CD8-positive, alpha-beta T cell (primary cell): ENCODE measurements at regions of chr21 and their contacts with region 1.

Region 1: GRCh38 chr21:42009831-42010523 is at the start of gene ZBTB21:
- DNase-seq: peak; percentile 95 to 99 (median 98)
- ATAC-seq: peak; percentile 75
- H3K4me3 ChIP-seq: peak within 1 kb of the TSS; percentile 64 to 95
- H3K4me3 Mint-ChIP-seq: peak within 1 kb of the TSS; percentile 98
- H3K27ac ChIP-seq: peak within 1 kb of the TSS; percentile 96 to 100
- H3K27ac Mint-ChIP-seq: peak within 1 kb of the TSS; percentile 100
- H3K4me1 ChIP-seq: peaks cover 5% of the 10 kb centered on the region
- H3K4me1 Mint-ChIP-seq: peaks cover 38% of the 10 kb centered on the region
- H3K27me3 ChIP-seq: no peaks in the 10 kb centered on the region
- H3K27me3 Mint-ChIP-seq: no peaks in the 10 kb centered on the region
- CTCF ChIP-seq: no peak
- total RNA-seq, gene ZBTB21: 130 to 141 TPM

Region 2: DNA sequence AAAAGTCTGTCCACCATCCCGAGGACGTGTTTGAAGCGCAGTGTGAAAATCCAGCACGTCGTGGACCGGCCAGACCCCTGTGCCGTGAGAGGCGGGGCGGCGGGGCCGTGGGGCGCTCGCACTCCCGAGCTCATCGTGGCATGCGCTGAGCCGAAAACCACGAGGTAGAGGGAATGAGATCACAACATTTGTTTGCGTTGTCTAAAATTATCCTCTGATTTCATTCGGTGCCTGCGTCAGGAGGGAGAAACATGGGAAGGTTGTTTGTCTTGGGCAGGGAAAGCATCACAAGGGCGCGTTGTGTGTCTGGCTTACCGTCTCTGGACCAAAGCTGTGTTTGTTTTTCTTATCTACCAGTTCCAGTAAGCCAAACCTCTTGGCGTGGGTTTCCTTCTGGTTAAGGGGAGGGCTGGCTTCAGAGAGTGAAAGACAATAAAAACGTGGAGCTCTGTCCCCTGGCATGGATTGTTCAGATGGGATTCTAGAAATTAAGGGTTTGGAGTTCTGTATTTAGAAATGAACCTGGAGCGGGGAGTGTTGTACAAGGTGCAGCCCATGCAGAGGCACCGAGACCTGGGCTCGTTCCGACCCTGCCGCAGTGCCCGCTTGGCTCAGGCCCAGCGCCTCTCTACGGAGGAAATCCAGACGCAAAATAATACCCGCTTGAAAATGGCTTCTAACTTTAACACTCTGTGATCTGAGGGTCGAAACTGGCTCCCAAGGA is 762.3 kb before region 1 on chr21:
- CTCF ChIA-PET with region 1: no interaction called
- POLR2A ChIA-PET with region 1: no interaction called
- intact Hi-C with region 1: no loop called
- DNase-seq: no peak
- ATAC-seq: no peak
- H3K4me3 ChIP-seq: no peak overlapping the region
- H3K4me3 Mint-ChIP-seq: no peak overlapping the region
- H3K27ac ChIP-seq: no peak overlapping the region
- H3K27ac Mint-ChIP-seq: no peak overlapping the region
- H3K4me1 ChIP-seq: no peaks in the 10 kb centered on the region
- H3K4me1 Mint-ChIP-seq: no peaks in the 10 kb centered on the region
- H3K27me3 ChIP-seq: no peaks in the 10 kb centered on the region
- H3K27me3 Mint-ChIP-seq: peaks cover 13% of the 10 kb centered on the region
- CTCF ChIP-seq: no peak

Region 3: GRCh38 chr21:41816220-41817165 is 193.5 kb before region 1 on chr21:
- CTCF ChIA-PET with region 1: interaction called, 3 read pairs
- POLR2A ChIA-PET with region 1: no interaction called
- intact Hi-C with region 1: loop called in 1 of 2 experiments (anchors 2 kb)
- DNase-seq: peak; percentile 31 to 75 (median 55)
- ATAC-seq: peak; percentile 78
- H3K4me3 ChIP-seq: no peak overlapping the region
- H3K4me3 Mint-ChIP-seq: no peak overlapping the region
- H3K27ac ChIP-seq: no peak overlapping the region
- H3K27ac Mint-ChIP-seq: no peak overlapping the region
- H3K4me1 ChIP-seq: peaks cover 6% of the 10 kb centered on the region
- H3K4me1 Mint-ChIP-seq: peaks cover 7% of the 10 kb centered on the region
- H3K27me3 ChIP-seq: no peaks in the 10 kb centered on the region
- H3K27me3 Mint-ChIP-seq: no peaks in the 10 kb centered on the region
- CTCF ChIP-seq: peak; percentile 72

Region 4: GRCh38 chr21:41879190-41879998 is 130.6 kb before region 1 on chr21 and contains the start of gene PRDM15:
- CTCF ChIA-PET with region 1: interaction called, 3 read pairs
- POLR2A ChIA-PET with region 1: interaction called, 3 read pairs
- intact Hi-C with region 1: loop called (anchors 1 to 2 kb)
- DNase-seq: peak; percentile 55 to 89 (median 78)
- ATAC-seq: peak; percentile 68
- H3K4me3 ChIP-seq: peak within 1 kb of the TSS; percentile 69 to 89
- H3K4me3 Mint-ChIP-seq: peak within 1 kb of the TSS; percentile 90
- H3K27ac ChIP-seq: peak within 1 kb of the TSS; percentile 71 to 78
- H3K27ac Mint-ChIP-seq: peak within 1 kb of the TSS; percentile 93
- H3K4me1 ChIP-seq: peaks cover 14% of the 10 kb centered on the region
- H3K4me1 Mint-ChIP-seq: peaks cover 27% of the 10 kb centered on the region
- H3K27me3 ChIP-seq: no peaks in the 10 kb centered on the region
- H3K27me3 Mint-ChIP-seq: no peaks in the 10 kb centered on the region
- CTCF ChIP-seq: no peak
- total RNA-seq, gene PRDM15: 8.5 to 9.2 TPM

Region 5: DNA sequence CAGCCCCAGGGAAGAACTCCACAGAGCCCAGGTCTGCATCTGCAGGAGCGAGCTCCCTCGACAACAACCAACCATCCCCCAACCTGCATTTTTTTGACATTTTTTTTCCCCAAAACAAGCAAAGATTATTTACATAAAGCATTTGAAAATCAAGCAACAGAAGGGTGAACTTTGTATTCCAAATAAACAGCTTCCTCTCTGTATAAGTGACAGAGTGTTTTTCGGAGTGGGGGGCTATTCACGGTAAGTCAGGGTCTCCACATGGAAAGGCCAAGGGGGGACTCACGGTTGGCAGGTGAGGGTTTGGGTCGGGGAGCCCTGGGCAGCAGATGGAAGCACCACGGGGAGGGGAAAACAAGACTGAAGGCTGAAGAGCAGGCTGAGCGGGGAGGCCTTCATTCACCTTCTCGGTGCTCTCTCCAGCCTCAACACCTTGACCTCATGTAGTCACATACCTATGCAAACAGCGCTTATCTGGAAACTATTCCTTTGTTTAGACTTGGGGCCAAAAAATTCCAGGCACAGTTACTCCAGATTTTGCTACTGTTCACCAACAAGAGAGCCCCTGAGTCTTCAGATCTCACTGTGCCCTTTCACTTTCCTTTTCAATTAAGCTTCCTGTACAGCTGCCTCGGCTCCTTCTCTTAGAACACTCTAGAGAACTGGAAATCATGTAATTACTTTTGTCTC is 83.7 kb before region 1 on chr21:
- CTCF ChIA-PET with region 1: no interaction called
- POLR2A ChIA-PET with region 1: interaction called, 5 read pairs
- intact Hi-C with region 1: loop called (anchors 2 kb)
- DNase-seq: peak in 8 of 9 experiments; percentile 14 to 81 (median 32)
- ATAC-seq: peak; percentile 91
- H3K4me3 ChIP-seq: peak overlapping the region; percentile 53 to 64
- H3K4me3 Mint-ChIP-seq: peak overlapping the region; percentile 96
- H3K27ac ChIP-seq: peak overlapping the region; percentile 72 to 89
- H3K27ac Mint-ChIP-seq: peak overlapping the region; percentile 99
- H3K4me1 ChIP-seq: peaks cover 42% of the 10 kb centered on the region
- H3K4me1 Mint-ChIP-seq: peaks cover 55% of the 10 kb centered on the region
- H3K27me3 ChIP-seq: no peaks in the 10 kb centered on the region
- H3K27me3 Mint-ChIP-seq: no peaks in the 10 kb centered on the region
- CTCF ChIP-seq: no peak

Region 6: DNA sequence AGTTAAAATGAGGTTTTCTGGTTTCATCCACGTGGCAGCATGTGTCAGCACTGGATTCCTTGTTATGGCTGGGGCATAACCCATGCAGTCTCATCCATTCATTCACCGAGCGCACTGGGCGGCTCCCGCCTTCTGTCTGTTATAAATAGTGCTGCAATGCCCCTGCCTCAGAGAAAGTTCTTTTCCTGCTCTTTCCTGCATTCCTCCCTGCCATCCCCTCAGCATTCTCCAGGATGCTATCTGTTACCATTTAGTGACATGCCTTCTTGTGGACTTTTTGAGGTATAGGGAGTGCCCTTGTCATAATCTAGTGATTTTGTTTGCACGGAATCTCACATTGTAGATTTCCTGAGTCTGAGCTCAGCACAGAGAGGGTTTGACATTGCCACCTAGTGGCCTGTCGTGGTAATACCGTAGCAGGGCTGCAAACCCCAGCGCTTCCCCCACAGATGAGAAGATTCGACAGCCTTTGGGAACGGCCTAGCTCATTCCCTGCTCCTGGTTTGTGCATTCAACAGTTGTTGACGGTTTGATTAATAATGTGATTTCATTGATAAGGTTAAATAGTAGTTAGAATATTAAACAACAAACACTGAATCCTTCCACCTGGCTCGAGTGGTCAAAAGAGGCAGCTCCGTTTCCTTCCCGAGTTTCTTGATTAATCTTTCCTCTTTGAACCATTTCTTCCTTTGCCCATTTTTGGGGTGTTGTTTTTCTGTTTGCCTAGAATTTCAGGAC is 107.4 kb after region 1 on chr21:
- CTCF ChIA-PET with region 1: interaction called, 11 read pairs
- POLR2A ChIA-PET with region 1: interaction called, 3 read pairs
- intact Hi-C with region 1: no loop called
- DNase-seq: peak; percentile 52 to 87 (median 77)
- ATAC-seq: peak; percentile 96
- H3K4me3 ChIP-seq: no peak overlapping the region
- H3K4me3 Mint-ChIP-seq: no peak overlapping the region
- H3K27ac ChIP-seq: no peak overlapping the region
- H3K27ac Mint-ChIP-seq: no peak overlapping the region
- H3K4me1 ChIP-seq: peaks cover 19% of the 10 kb centered on the region
- H3K4me1 Mint-ChIP-seq: peaks cover 19% of the 10 kb centered on the region
- H3K27me3 ChIP-seq: peaks cover 3 to 12% of the 10 kb centered on the region in 2 experiments
- H3K27me3 Mint-ChIP-seq: peaks cover 44% of the 10 kb centered on the region
- CTCF ChIP-seq: peak; percentile 96

Region 7: GRCh38 chr21:42233067-42233961 is 223.3 kb after region 1 on chr21:
- CTCF ChIA-PET with region 1: no interaction called
- POLR2A ChIA-PET with region 1: no interaction called
- intact Hi-C with region 1: loop called in 1 of 2 experiments (anchors 10 kb)
- DNase-seq: peak; percentile 49 to 95 (median 72)
- ATAC-seq: peak; percentile 57
- H3K4me3 ChIP-seq: peak overlapping the region in 1 of 2 experiments; percentile 1
- H3K4me3 Mint-ChIP-seq: peak overlapping the region; percentile 70
- H3K27ac ChIP-seq: peak overlapping the region; percentile 69 to 93
- H3K27ac Mint-ChIP-seq: peak overlapping the region; percentile 95
- H3K4me1 ChIP-seq: peaks cover 80% of the 10 kb centered on the region
- H3K4me1 Mint-ChIP-seq: peaks cover 94% of the 10 kb centered on the region
- H3K27me3 ChIP-seq: no peaks in the 10 kb centered on the region
- H3K27me3 Mint-ChIP-seq: no peaks in the 10 kb centered on the region
- CTCF ChIP-seq: peak; percentile 50